GM12878 (cell line): ENCODE measurements at regions of chr6 and their contacts with region 1.

Region 1: GRCh38 chr6:156852132-156852857 is 75.1 kb downstream of the ARID1B start:
- DNase-seq: no peak
- ATAC-seq: peak; percentile 69
- H3K4me3 ChIP-seq: peak overlapping the region; percentile 46
- H3K27ac ChIP-seq: peak overlapping the region; percentile 64
- H3K4me1 ChIP-seq: peaks cover 62% of the 10 kb centered on the region
- H3K27me3 ChIP-seq: no peaks in the 10 kb centered on the region
- CTCF ChIP-seq: no peak
- EP300 ChIP-seq: no peak
- POLR2A ChIP-seq: no peak
- RAD21 ChIP-seq: no peak

Region 2: DNA sequence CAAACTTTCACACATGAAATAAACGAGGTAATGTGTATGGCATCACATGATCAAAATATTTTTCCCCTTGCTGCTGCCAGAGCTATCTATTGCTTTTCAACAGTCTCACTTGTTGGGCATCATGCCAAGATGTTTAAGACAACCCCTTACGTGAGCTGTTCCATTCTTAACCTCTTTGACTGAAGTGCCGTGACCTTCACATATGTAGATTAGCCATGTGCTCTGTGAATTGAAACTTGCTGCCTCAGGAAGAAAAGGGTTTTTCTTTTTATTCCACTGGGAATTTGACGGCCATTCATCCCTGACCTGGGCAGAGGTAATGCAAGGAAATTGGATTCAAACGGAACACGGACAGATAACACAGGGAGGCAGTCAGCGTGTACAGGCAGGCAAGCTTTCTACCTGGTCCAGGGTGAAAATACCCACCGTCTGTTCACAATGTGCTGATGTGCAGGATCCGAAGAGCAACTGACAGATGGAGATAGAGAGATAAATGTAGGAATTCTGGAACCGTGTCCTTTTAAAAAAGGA is 60.9 kb before region 1 on chr6:
- CTCF ChIA-PET with region 1: no interaction called
- POLR2A ChIA-PET with region 1: interaction called, 5 read pairs
- RAD21 ChIA-PET with region 1: interaction called, 7 read pairs
- SMC1A ChIA-PET with region 1: interaction called, 10 read pairs
- in situ Hi-C with region 1: no loop called
- intact Hi-C with region 1: no loop called
- DNase-seq: peak; percentile 72
- ATAC-seq: peak; percentile 56
- H3K4me3 ChIP-seq: peak overlapping the region; percentile 24; the same call in 1 of the 2 replicates
- H3K27ac ChIP-seq: peak overlapping the region; percentile 23
- H3K4me1 ChIP-seq: peaks cover 50% of the 10 kb centered on the region
- H3K27me3 ChIP-seq: no peaks in the 10 kb centered on the region
- CTCF ChIP-seq: no peak
- EP300 ChIP-seq: no peak
- POLR2A ChIP-seq: 0 out of 2 replicates have a peak, but pooled peaks have one; percentile 36
- RAD21 ChIP-seq: no peak

Region 3: GRCh38 chr6:156866220-156867015 is 14.1 kb after region 1 on chr6:
- CTCF ChIA-PET with region 1: no interaction called
- POLR2A ChIA-PET with region 1: interaction called, 4 read pairs
- RAD21 ChIA-PET with region 1: interaction called, 3 read pairs
- SMC1A ChIA-PET with region 1: interaction called, 29 read pairs
- in situ Hi-C with region 1: no loop called
- intact Hi-C with region 1: no loop called
- DNase-seq: no peak
- ATAC-seq: peak; percentile 85
- H3K4me3 ChIP-seq: 0 out of 2 replicates have a peak overlapping the region, but pooled peaks have one; percentile 18
- H3K27ac ChIP-seq: peak overlapping the region; percentile 45
- H3K4me1 ChIP-seq: peaks cover 31% of the 10 kb centered on the region
- H3K27me3 ChIP-seq: no peaks in the 10 kb centered on the region
- CTCF ChIP-seq: peak in 1 of 3 experiments; percentile 12; a peak in 1 of 6 replicates
- EP300 ChIP-seq: 0 out of 4 replicates have a peak, but pooled peaks of 1 of the 2 experiments have one; percentile 24
- POLR2A ChIP-seq: no peak
- RAD21 ChIP-seq: peak; percentile 41

Region 4: GRCh38 chr6:156883497-156884252 is 31.4 kb after region 1 on chr6:
- CTCF ChIA-PET with region 1: no interaction called
- POLR2A ChIA-PET with region 1: no interaction called
- RAD21 ChIA-PET with region 1: no interaction called
- SMC1A ChIA-PET with region 1: interaction called, 13 read pairs
- in situ Hi-C with region 1: no loop called
- intact Hi-C with region 1: no loop called
- DNase-seq: no peak
- ATAC-seq: peak; percentile 62
- H3K4me3 ChIP-seq: no peak overlapping the region
- H3K27ac ChIP-seq: peak overlapping the region; percentile 19; the same call in 1 of the 2 replicates
- H3K4me1 ChIP-seq: peaks cover 32% of the 10 kb centered on the region
- H3K27me3 ChIP-seq: no peaks in the 10 kb centered on the region
- CTCF ChIP-seq: no peak
- EP300 ChIP-seq: no peak
- POLR2A ChIP-seq: no peak
- RAD21 ChIP-seq: no peak

Region 5: DNA sequence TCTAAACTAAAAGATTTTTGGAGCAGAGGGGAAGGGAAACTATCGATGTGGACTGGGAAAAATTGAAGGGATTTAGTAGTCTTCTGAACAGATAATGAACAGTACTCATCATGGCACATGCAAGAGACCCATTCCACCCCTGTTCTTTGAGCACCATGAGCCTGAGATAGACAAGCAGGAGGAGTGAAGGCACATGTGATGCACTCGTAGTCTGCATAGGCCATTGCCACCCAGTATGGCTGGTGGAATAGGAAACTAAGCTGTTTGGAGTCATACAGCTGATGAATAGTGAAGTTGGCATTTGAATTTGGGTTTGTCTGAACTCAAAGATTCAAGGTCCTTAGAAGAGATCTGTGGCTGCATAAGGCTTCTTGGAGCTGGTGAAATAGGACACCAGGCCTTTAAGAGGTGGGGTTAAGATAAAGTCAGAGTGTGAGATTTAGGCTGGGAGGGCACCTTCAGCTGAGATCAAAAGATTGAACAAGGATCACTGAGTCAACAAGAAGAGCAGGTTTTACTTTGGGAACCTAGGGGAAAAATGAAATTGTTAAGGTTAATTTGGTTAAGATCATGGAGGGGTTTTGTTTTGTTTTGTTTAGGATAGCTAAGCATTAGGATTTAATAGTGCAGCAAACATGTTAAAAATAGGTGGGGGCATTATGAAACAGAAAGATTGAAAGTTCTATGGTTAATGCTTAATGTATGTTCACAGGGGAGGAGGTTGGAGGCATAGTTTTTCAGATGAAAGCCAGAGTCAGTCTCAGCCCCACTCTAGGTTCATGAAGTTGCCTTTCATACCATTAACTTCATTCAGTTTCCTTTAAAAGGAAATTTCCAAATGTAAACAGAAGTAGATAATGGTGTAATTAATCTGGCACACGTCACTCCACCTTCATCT is 73.7 kb after region 1 on chr6:
- CTCF ChIA-PET with region 1: interaction called, 4 read pairs
- POLR2A ChIA-PET with region 1: no interaction called
- RAD21 ChIA-PET with region 1: interaction called, 3 read pairs
- SMC1A ChIA-PET with region 1: interaction called, 14 read pairs
- in situ Hi-C with region 1: no loop called
- intact Hi-C with region 1: no loop called
- DNase-seq: no peak
- ATAC-seq: peak; percentile 91
- H3K4me3 ChIP-seq: no peak overlapping the region
- H3K27ac ChIP-seq: peak overlapping the region; percentile 40; the same call in 1 of the 2 replicates
- H3K4me1 ChIP-seq: peaks cover 9% of the 10 kb centered on the region
- H3K27me3 ChIP-seq: no peaks in the 10 kb centered on the region
- CTCF ChIP-seq: no peak
- EP300 ChIP-seq: no peak
- POLR2A ChIP-seq: no peak
- RAD21 ChIP-seq: no peak

Region 6: DNA sequence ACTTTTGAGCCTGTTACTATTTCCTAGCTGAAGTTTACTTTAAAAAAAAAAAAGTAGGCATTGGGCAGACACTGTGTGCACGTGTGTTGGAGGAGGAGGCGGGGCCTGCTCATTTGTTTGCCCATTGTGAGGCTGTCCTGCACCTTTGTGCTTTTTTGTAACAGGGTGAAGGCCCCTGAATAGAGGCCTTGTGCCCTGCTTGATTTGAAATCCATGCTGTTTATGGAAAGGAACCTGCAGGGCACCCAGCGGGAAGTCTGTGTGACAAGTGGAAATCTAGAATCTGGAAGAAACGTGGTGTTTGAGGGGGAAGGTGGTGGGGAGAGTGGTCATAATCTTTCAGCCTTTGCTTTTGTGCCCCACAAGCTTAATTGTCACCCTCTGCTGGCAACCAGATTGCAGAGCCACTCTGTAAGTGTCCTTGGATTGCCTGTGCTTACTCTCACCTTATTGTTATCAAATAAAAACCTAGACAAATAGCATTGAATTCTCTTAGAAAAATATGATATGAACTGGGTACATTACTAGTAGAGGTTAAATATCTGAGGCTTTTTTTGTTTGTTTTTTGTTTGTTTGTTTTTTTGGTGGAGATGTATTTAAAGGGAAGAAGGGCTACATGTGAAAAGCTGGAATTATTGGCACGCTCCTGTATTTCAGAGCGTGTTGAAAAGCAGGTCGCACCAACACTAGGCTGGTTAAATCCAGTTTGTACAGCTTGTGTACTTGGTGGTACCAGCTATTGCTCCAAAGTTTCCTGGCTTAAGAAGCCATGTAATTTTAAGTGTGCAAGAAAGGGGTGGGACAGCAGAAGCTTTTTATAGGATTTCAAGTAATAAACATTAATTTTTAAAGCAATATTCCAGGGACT is 81.1 kb after region 1 on chr6:
- CTCF ChIA-PET with region 1: interaction called, 10 read pairs
- POLR2A ChIA-PET with region 1: interaction called, 4 read pairs
- RAD21 ChIA-PET with region 1: interaction called, 15 read pairs
- SMC1A ChIA-PET with region 1: interaction called, 12 read pairs
- in situ Hi-C with region 1: no loop called
- intact Hi-C with region 1: no loop called
- DNase-seq: no peak
- ATAC-seq: peak; percentile 66
- H3K4me3 ChIP-seq: no peak overlapping the region
- H3K27ac ChIP-seq: no peak overlapping the region
- H3K4me1 ChIP-seq: no peaks in the 10 kb centered on the region
- H3K27me3 ChIP-seq: no peaks in the 10 kb centered on the region
- CTCF ChIP-seq: peak in 2 of 3 experiments; percentile 3 to 36; a peak in 4 of 6 replicates
- EP300 ChIP-seq: no peak
- POLR2A ChIP-seq: no peak
- RAD21 ChIP-seq: peak; percentile 23; the same call in 1 of the 2 replicates

Region 7: GRCh38 chr6:156943816-156944215 is 91.5 kb after region 1 on chr6:
- CTCF ChIA-PET with region 1: no interaction called
- POLR2A ChIA-PET with region 1: no interaction called
- RAD21 ChIA-PET with region 1: no interaction called
- SMC1A ChIA-PET with region 1: no interaction called
- in situ Hi-C with region 1: no loop called
- intact Hi-C with region 1: no loop called
- DNase-seq: no peak
- ATAC-seq: no peak
- H3K4me3 ChIP-seq: no peak overlapping the region
- H3K27ac ChIP-seq: no peak overlapping the region
- H3K4me1 ChIP-seq: no peaks in the 10 kb centered on the region
- H3K27me3 ChIP-seq: no peaks in the 10 kb centered on the region
- CTCF ChIP-seq: no peak
- EP300 ChIP-seq: no peak
- POLR2A ChIP-seq: no peak
- RAD21 ChIP-seq: no peak

Region 8: DNA sequence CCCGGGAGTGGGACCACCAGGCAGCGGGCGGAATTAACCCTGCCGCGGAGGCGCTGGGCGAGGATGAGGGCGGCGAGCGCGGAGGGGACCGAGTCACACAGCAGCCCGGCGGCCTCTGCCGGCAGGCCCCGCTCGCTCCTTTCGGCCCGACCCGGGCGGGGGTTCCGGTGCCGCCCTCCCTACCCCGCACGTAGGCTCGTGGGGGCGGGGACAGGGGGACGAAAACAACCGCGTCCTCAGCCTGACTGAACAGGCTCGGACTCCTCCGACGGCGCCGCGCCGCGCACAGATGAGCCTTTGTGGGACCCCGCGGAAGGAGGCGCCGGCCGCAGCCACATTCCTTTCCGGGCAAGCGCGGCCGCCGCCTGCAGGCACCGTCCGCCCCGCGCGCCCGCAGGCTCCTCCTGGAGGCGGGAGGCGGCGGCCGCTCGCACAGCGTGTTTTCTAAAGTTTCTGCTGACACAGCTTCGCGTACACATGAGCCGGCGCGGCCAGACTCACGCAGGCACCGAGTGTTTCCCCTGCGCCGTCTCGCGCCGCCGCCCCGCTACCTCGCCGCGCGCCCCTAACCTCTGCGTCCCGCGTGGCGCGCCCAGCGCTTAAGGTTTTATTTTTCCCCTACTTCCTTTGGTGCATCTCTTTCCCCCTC is 169.2 kb after region 1 on chr6:
- CTCF ChIA-PET with region 1: no interaction called
- POLR2A ChIA-PET with region 1: no interaction called
- RAD21 ChIA-PET with region 1: interaction called, 4 read pairs
- SMC1A ChIA-PET with region 1: interaction called, 5 read pairs
- in situ Hi-C with region 1: no loop called
- intact Hi-C with region 1: loop called (anchors 5 kb)
- DNase-seq: no peak
- ATAC-seq: peak; percentile 88
- H3K4me3 ChIP-seq: peak overlapping the region; percentile 86
- H3K27ac ChIP-seq: peak overlapping the region; percentile 95
- H3K4me1 ChIP-seq: peaks cover 32% of the 10 kb centered on the region
- H3K27me3 ChIP-seq: no peaks in the 10 kb centered on the region
- CTCF ChIP-seq: peak; percentile 17 to 42 (median 19); a peak in 4 of 6 replicates
- EP300 ChIP-seq: peak in 1 of 2 experiments; percentile 20; a peak in 1 of 4 replicates
- POLR2A ChIP-seq: peak; percentile 98
- RAD21 ChIP-seq: peak; percentile 17; the same call in 1 of the 2 replicates